ENCODE measurements at regions of chr2 and their contacts with region 1.

Region 1: GRCh38 chr2:151200277-151200676 is 61.4 kb downstream of the RBM43 start:
- DNase-seq: no peak
- H3K4me3 ChIP-seq: no peak overlapping the region
- H3K27ac ChIP-seq: no peak overlapping the region
- H3K27me3 ChIP-seq: peaks cover 2% of the 10 kb centered on the region
- CTCF ChIP-seq: no peak

Region 2: DNA sequence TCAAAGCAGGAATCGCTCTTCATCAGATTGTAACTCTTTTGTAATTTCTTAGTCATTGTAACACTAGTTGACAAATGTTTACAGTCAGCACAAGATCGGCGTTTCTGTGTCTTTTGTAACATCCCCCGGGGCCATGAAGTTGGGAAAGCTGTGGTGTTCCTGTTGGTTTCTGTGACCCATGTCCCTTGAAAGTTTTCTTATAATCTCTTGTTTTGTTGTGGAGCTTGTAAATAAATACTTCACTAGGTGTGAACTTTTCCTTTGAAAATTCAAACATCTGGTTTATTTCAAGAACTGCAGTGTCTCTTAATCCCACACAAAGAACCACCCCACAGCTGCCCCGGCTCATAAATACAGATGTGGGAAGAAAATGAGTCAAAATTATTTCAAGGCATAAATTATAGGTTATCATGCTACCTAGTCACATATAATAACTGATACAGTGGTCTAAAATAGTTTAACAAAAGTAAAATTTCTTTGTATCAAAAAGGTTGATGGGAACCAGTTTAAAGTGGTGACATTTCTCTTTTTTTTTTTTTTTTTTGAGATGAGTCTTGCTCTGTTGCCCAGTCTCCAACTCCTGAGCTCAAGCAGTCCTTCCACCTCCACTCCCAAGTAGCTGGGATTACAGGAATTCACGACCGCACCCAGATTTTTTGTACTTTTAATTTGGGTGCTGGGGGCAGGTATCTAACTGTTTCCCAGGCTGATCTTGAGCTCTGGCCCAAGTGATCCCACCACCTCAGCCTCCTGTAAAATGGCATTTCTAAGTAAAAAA is 90.0 kb after region 1 on chr2:
- CTCF ChIA-PET with region 1: no interaction called
- POLR2A ChIA-PET with region 1: interaction called, 10 read pairs
- DNase-seq: no peak
- H3K4me3 ChIP-seq: peak overlapping the region; percentile 65
- H3K27ac ChIP-seq: peak overlapping the region; percentile 77
- H3K27me3 ChIP-seq: no peaks in the 10 kb centered on the region
- CTCF ChIP-seq: no peak

Region 3: GRCh38 chr2:151334082-151334815 is 134.0 kb after region 1 on chr2:
- CTCF ChIA-PET with region 1: no interaction called
- POLR2A ChIA-PET with region 1: no interaction called
- DNase-seq: peak; percentile 79
- H3K4me3 ChIP-seq: no peak overlapping the region
- H3K27ac ChIP-seq: peak overlapping the region; percentile 34
- H3K27me3 ChIP-seq: no peaks in the 10 kb centered on the region
- CTCF ChIP-seq: no peak

Measured in AG04450 (cell line).